A549 (cell line): ENCODE measurements at regions of chrX and their contacts with region 1.

Region 1: DNA sequence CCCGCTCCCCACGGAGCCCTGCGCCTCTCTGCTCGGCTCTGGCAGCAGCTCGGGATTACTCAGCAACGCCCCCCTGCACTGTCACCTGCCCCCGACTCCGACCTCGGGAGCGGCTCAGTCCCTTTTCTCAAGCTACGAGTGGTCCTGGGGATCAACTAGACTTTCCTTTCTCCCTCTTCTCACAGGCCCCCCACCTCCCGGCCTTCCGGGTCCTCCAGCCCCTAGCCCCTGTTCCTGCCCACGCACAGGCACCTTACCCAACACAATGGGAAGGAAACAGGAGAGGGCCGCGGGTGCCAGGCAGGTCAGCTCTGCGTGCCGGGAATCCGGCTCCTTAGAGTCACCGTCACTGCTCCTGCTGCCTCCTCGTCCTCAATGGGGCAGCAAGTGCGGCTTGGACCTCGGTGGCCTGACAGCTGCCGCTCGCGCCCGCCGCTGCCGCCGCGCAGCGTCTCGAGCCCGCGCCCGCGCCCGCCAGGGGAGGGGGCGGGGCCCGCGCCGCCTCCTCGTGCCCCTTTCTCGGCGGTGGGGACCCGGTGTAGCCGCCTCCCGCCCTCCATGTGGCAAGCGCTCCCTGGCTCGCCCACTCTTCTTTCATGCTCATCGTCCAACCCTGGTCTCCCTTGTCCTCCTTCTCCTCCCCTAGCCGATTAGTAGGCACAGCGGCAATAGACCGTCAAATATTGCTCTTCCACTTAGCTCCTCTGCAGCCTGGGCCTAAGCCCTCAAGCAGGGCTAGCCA is at the start of gene RAB9B:
- DNase-seq: no peak
- ATAC-seq: peak; percentile 88 to 97
- H3K4me3 ChIP-seq: peak within 1 kb of the TSS; percentile 59
- H3K27ac ChIP-seq: peak within 1 kb of the TSS in 1 of 2 experiments; percentile 75; a peak in 4 of 6 replicates
- H3K4me1 ChIP-seq: no peaks in the 10 kb centered on the region
- CTCF ChIP-seq: no peak
- EP300 ChIP-seq: no peak
- POLR2A ChIP-seq: no peak
- RAD21 ChIP-seq: no peak
- polyA plus RNA-seq, gene RAB9B: 0.15 and 0.16 TPM in 2 replicates

Region 2: GRCh38 chrX:103792916-103793544 is 38.9 kb before region 1 on chrX:
- CTCF ChIA-PET with region 1: no interaction called
- POLR2A ChIA-PET with region 1: no interaction called
- DNase-seq: no peak
- ATAC-seq: no peak
- H3K4me3 ChIP-seq: no peak overlapping the region
- H3K27ac ChIP-seq: no peak overlapping the region
- H3K4me1 ChIP-seq: no peaks in the 10 kb centered on the region
- CTCF ChIP-seq: no peak
- EP300 ChIP-seq: no peak
- POLR2A ChIP-seq: no peak
- RAD21 ChIP-seq: no peak

Region 3: GRCh38 chrX:103817502-103817901 is 14.5 kb before region 1 on chrX:
- CTCF ChIA-PET with region 1: interaction called, 13 read pairs
- POLR2A ChIA-PET with region 1: no interaction called
- DNase-seq: peak in 1 of 2 experiments; percentile 38
- ATAC-seq: peak in 1 of 2 experiments; percentile 59; a peak in 2 of 6 replicates
- H3K4me3 ChIP-seq: no peak overlapping the region
- H3K27ac ChIP-seq: no peak overlapping the region
- H3K4me1 ChIP-seq: 0 out of 3 replicates have a peak, but pooled peaks cover 5% of the 10 kb centered on the region
- CTCF ChIP-seq: peak; percentile 70
- EP300 ChIP-seq: no peak
- POLR2A ChIP-seq: no peak
- RAD21 ChIP-seq: peak; percentile 65